IMR-90 (cell line): ENCODE measurements at regions of chrX and their contacts with region 1.

Region 1: DNA sequence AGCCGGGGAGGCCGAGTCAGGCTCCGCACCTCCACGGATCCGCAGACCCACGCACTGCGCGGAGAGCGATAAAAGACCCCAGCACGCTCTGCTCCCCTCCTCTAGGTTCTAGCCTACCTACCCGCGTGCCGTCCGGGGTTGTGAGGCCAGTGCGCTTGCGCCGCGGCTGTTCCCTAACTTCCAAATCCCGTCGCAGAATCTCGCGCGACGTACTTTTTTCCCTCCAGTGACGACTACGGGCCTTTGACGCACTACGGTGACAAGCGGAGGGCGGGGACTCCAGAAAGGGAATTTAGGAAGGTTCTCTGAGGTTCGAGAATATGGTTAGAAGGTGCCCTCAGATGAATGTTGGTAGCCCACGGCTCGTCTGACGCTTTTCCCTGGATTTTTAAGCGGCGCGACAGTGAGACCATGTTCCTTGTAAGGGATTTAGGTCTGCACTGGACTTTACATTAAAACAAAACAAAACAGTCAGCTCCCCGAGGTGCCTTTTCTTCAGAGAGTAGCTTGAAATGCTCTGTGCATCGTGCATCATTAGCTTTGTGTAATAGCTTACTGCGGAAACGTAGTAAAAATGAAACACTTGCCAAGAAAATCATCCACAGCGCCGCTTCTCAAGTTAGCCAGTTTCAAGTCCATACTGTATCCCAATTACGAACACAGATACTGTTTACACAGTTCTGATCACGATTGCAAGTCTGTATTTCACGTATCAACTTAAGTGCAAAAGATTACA is at the start of gene NKRF:
- DNase-seq: peak; percentile 90
- ATAC-seq: peak; percentile 81
- H3K4me3 ChIP-seq: peak within 1 kb of the TSS; percentile 97
- H3K27ac ChIP-seq: peak within 1 kb of the TSS; percentile 93
- H3K4me1 ChIP-seq: no peaks in the 10 kb centered on the region
- H3K27me3 ChIP-seq: no peaks in the 10 kb centered on the region
- CTCF ChIP-seq: no peak
- POLR2A ChIP-seq: peak; percentile 82
- RAD21 ChIP-seq: no peak
- total RNA-seq, gene NKRF: 2.2 and 3.6 TPM in 2 replicates

Region 2: DNA sequence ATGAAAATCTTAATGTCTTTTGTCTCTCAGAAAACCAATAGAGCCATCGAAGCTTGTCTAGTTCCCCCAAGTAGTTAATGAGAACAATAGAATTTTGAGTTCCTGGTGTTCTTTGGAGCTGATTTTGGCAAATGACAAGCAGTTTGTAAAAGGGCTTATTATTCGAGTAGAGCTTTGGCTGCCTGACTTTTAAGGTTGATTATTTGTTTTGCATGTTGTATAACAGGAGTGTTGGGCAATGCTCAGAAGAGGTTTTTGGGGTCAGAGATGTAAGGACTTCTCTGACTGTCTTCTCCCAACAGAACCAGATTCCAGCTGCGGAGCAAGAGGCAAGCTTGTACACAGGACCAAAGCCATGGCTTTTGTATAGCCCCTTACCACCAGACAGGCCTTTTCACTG is 752.9 kb before region 1 on chrX:
- CTCF ChIA-PET with region 1: no interaction called
- POLR2A ChIA-PET with region 1: no interaction called
- dilution Hi-C with region 1: no loop called
- in situ Hi-C with region 1: no loop called
- intact Hi-C with region 1: no loop called
- DNase-seq: no peak
- ATAC-seq: no peak
- H3K4me3 ChIP-seq: no peak overlapping the region
- H3K27ac ChIP-seq: no peak overlapping the region
- H3K4me1 ChIP-seq: no peaks in the 10 kb centered on the region
- H3K27me3 ChIP-seq: peaks cover 8% of the 10 kb centered on the region
- CTCF ChIP-seq: no peak
- POLR2A ChIP-seq: no peak
- RAD21 ChIP-seq: no peak

Region 3: DNA sequence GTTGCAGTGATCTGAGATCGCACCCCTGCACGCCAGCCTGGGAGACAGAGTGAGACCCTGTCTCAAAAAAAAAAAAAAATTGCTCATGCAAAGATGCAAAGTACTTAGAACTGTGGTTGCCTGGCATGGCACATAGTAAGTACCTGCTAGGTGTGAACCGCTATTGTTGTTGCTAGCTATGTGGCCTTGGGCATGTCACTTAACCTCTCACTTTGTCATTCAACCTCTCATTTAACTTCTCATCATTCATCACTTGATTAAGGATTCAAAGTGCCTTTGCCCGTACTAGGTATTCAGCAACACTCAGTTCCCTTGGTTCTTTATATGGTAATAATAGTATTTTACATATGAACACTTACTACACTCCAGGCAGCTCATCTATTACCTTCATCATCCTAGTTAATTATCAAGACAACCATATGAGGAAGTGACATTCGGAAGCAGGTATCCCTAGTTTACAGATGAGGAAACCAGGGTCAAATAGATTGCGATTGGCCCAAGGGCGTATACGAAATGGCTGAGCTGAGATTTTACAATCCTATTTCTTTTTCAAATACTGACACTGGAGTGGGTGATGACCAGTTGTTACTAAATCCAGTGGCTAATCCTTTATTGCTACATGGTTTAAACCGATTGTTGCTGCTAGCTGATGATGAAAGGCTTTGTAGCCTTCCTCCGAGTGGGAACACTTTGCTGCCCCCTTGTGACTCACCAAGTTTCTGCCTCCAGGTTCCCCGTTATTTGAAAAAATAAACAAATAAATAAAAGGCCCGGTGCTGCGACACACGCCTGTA is 123.2 kb after region 1 on chrX:
- CTCF ChIA-PET with region 1: interaction called, 5 read pairs
- POLR2A ChIA-PET with region 1: no interaction called
- dilution Hi-C with region 1: no loop called
- in situ Hi-C with region 1: no loop called
- intact Hi-C with region 1: loop called (anchors 1 kb)
- DNase-seq: peak; percentile 64
- ATAC-seq: peak; percentile 70
- H3K4me3 ChIP-seq: no peak overlapping the region
- H3K27ac ChIP-seq: no peak overlapping the region
- H3K4me1 ChIP-seq: no peaks in the 10 kb centered on the region; the same call in 1 of the 2 replicates
- H3K27me3 ChIP-seq: no peaks in the 10 kb centered on the region; the same call in 1 of the 2 replicates
- CTCF ChIP-seq: peak; percentile 65
- POLR2A ChIP-seq: no peak
- RAD21 ChIP-seq: peak; percentile 72

Region 4: DNA sequence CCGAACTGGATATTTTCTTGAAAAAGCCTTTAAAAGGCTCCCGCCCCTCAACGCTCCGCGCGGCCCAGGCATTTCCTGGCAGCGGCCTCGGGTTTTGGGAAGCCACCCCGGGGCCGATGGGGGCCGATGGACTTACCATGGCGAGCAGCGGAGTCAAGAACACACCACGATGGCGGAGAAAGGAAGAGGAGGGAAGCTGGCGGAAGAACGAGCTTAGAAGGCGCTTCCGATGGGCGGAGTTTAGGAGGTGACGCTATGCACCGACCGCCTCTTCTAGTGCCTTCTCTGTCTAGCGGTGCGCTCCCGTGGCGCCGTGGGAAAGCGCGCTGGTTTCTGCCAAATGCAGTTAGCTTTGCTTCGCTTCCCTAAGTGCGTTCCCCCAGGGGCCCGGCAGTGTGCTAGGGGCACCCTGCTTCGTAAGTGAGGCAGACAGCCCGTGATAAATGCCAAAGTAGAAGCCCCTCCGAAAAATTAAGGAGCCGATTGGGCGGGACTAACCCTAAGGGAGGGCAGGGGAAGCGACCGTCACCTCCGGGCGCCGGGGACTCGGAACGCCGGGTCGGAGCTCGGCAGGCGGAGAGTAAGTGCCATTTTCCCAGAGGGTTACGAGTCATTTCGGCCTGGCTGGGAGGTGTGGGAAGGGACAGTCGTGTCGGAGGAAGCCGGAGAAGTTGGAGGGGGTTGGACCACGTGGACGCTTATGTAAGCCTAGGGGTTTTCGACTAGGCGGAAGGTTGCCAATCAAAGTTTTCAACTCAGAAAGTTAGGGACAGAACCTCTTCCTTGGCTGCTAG is 185.2 kb after region 1 on chrX and contains the start of gene RPL39:
- CTCF ChIA-PET with region 1: interaction called, 3 read pairs
- POLR2A ChIA-PET with region 1: no interaction called
- dilution Hi-C with region 1: no loop called
- in situ Hi-C with region 1: no loop called
- intact Hi-C with region 1: loop called (anchors 5 kb)
- DNase-seq: peak; percentile 87
- ATAC-seq: peak; percentile 94
- H3K4me3 ChIP-seq: peak within 1 kb of the TSS; percentile 72
- H3K27ac ChIP-seq: peak within 1 kb of the TSS; percentile 86
- H3K4me1 ChIP-seq: peaks cover 3% of the 10 kb centered on the region; the same call in 1 of the 2 replicates
- H3K27me3 ChIP-seq: no peaks in the 10 kb centered on the region
- CTCF ChIP-seq: no peak
- POLR2A ChIP-seq: peak; percentile 96
- RAD21 ChIP-seq: no peak
- total RNA-seq, gene RPL39: 681 and 716 TPM in 2 replicates

Region 5: DNA sequence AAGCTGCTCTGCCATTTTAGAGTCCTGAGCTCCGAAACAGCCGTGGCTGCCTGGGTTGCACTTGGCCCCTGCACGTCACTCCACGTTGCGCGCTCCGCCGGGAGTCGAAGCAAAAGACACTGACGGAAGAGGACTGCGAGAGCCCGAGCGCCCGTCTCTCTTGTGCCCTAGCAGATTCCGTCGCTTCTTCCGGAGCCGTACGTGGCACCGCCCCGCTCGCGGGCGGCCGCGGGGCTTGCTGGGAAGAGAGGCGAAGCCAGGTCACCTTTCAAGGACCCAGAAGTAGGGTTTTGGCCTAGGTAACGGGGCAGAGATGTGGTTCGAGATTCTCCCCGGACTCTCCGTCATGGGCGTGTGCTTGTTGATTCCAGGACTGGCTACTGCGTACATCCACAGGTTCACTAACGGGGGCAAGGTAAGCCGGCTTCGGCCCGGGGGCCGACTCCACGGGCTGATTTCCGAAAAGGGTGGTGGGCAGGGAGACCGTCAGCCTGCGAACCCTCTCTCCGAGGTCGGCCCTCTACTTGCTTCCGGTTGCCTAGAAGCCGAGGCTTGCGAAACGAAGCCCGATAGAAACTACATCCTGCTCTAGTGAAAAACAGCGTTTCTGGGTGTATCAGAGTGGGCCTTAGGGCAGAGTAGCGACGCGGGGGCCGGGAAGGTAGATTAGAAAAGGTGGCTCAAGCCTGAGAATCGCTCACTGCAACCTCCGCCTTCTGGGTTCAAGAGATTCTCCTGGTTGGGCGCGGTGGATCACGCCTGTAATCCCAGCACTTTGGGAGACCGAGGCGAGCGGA is 265.3 kb after region 1 on chrX and contains the starts of genes NDUFA1 and RNF113A:
- CTCF ChIA-PET with region 1: no interaction called
- POLR2A ChIA-PET with region 1: no interaction called
- dilution Hi-C with region 1: no loop called
- in situ Hi-C with region 1: no loop called
- intact Hi-C with region 1: loop called (anchors 5 kb)
- DNase-seq: peak; percentile 81
- ATAC-seq: peak; percentile 93
- H3K4me3 ChIP-seq: peak within 1 kb of the TSS; percentile 89
- H3K27ac ChIP-seq: peak within 1 kb of the TSS; percentile 88
- H3K4me1 ChIP-seq: no peaks in the 10 kb centered on the region
- H3K27me3 ChIP-seq: no peaks in the 10 kb centered on the region
- CTCF ChIP-seq: no peak
- POLR2A ChIP-seq: peak; percentile 79; the same call in 1 of the 2 replicates
- RAD21 ChIP-seq: no peak
- total RNA-seq, gene NDUFA1: 12.5 and 47.5 TPM in 2 replicates
- total RNA-seq, gene RNF113A: 16.5 and 20.6 TPM in 2 replicates